CD4-positive, alpha-beta memory T cell (primary cell): ENCODE measurements at regions of chr6 and their contacts with region 1.

Region 1: DNA sequence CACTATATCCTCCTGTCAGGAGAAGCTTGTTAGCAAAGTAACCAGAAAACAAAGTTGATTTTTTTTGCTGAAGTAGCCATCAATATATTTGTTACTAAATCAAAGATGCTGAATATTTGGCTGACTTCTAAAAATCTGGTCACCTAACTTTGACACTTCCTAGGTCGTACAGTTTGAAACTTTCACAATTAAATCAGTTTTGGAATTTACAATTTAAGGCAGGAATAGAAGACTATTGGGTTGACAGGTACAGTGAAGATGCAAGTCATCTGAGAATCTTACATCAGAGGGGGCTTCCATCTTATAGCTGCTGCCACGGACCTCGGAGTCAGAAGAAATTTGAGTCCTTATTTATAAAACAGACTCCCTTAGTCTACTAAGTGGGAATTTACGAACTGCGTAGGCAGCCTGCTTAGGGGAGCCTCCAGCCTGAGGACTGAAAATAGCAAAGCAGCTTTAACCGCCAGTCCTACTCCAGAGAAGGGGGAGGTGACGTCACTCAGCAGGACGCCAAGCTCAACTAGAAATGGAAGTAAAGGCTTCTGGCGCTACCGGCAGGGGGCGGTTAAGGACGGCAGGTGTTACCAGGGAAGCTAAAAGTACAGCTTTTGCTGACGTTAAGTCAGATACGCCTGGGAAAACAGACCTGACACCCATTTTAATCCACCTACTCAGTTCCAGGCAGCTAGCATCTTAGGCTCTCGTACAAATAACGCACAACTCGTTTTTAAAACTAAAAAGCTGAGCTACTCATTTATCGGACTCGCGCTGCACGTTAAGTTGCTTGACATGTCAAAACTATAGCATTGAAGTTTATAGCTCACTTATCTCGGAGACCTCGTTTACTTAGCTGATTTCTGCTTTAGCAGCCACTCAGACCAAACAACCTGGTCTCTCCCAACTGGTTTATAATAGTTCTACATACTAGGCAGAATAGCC is 61.1 kb upstream of the HFE start:
- DNase-seq: peak; percentile 90 to 98 (median 94)
- H3K4me3 ChIP-seq: peak overlapping the region; percentile 67 to 74
- H3K4me3 Mint-ChIP-seq: peak overlapping the region; percentile 85 to 98 (median 92)
- H3K27ac ChIP-seq: peak overlapping the region; percentile 89
- H3K27ac Mint-ChIP-seq: peak overlapping the region; percentile 96 to 100 (median 99)
- H3K4me1 ChIP-seq: peaks cover 29% of the 10 kb centered on the region
- H3K4me1 Mint-ChIP-seq: peaks cover 22 to 60% (median 39%) of the 10 kb centered on the region in 4 donors
- H3K27me3 ChIP-seq: no peaks in the 10 kb centered on the region
- H3K27me3 Mint-ChIP-seq: peaks cover 0 to 4% of the 10 kb centered on the region in 2 donors

Region 2: DNA sequence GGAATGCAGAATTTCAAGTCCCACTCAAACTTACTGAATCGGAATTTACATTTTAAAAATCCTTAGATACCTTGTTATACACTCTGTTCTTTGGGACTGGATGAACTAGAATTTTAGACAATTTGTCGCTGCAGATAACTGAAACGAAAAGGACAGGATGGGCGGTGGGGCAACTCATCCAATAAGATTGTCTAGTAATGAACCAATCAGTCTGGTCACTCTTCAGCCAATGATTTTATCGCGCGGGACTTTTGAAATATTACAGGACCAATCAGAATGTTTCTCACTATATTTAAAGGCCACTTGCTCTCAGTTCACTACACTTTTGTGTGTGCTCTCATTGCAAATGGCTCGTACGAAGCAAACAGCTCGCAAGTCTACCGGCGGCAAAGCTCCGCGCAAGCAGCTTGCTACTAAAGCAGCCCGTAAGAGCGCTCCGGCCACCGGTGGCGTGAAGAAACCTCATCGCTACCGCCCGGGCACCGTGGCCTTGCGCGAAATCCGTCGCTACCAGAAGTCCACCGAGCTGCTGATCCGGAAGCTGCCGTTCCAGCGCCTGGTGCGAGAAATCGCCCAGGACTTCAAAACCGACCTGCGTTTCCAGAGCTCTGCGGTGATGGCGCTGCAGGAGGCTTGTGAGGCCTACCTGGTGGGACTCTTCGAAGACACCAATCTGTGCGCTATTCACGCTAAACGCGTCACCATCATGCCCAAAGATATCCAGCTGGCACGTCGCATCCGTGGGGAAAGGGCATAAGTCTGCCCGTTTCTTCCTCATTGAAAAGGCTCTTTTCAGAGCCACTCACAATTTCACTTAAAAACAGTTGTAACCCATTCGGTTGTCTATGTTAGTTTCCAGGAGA is 19.1 kb after region 1 on chr6:
- CTCF ChIA-PET with region 1: interaction called, 144 read pairs
- POLR2A ChIA-PET with region 1: interaction called, 1,198 read pairs
- intact Hi-C with region 1: loop called (anchors 1 kb)
- DNase-seq: peak; percentile 88 to 91 (median 90)
- H3K4me3 ChIP-seq: peak overlapping the region; percentile 72 to 74
- H3K4me3 Mint-ChIP-seq: peak overlapping the region; percentile 88 to 98 (median 94)
- H3K27ac ChIP-seq: peak overlapping the region; percentile 76
- H3K27ac Mint-ChIP-seq: peak overlapping the region; percentile 93 to 99 (median 98)
- H3K4me1 ChIP-seq: peaks cover 14% of the 10 kb centered on the region
- H3K4me1 Mint-ChIP-seq: peaks cover 12 to 28% (median 20%) of the 10 kb centered on the region in 4 donors
- H3K27me3 ChIP-seq: no peaks in the 10 kb centered on the region
- H3K27me3 Mint-ChIP-seq: no peaks in the 10 kb centered on the region

Region 3: GRCh38 chr6:26103770-26104456 is 77.8 kb after region 1 on chr6:
- CTCF ChIA-PET with region 1: interaction called, 7 read pairs
- POLR2A ChIA-PET with region 1: interaction called, 29 read pairs
- intact Hi-C with region 1: loop called (anchors 2 kb)
- DNase-seq: peak; percentile 93 to 96 (median 94)
- H3K4me3 ChIP-seq: peak overlapping the region; percentile 36 to 39
- H3K4me3 Mint-ChIP-seq: peak overlapping the region; percentile 84 to 96 (median 92)
- H3K27ac ChIP-seq: peak overlapping the region; percentile 66
- H3K27ac Mint-ChIP-seq: peak overlapping the region; percentile 96 to 100 (median 99)
- H3K4me1 ChIP-seq: peaks cover 17% of the 10 kb centered on the region
- H3K4me1 Mint-ChIP-seq: peaks cover 11 to 19% (median 15%) of the 10 kb centered on the region in 4 donors
- H3K27me3 ChIP-seq: no peaks in the 10 kb centered on the region
- H3K27me3 Mint-ChIP-seq: peaks cover 2 to 6% of the 10 kb centered on the region in 2 donors

Region 4: DNA sequence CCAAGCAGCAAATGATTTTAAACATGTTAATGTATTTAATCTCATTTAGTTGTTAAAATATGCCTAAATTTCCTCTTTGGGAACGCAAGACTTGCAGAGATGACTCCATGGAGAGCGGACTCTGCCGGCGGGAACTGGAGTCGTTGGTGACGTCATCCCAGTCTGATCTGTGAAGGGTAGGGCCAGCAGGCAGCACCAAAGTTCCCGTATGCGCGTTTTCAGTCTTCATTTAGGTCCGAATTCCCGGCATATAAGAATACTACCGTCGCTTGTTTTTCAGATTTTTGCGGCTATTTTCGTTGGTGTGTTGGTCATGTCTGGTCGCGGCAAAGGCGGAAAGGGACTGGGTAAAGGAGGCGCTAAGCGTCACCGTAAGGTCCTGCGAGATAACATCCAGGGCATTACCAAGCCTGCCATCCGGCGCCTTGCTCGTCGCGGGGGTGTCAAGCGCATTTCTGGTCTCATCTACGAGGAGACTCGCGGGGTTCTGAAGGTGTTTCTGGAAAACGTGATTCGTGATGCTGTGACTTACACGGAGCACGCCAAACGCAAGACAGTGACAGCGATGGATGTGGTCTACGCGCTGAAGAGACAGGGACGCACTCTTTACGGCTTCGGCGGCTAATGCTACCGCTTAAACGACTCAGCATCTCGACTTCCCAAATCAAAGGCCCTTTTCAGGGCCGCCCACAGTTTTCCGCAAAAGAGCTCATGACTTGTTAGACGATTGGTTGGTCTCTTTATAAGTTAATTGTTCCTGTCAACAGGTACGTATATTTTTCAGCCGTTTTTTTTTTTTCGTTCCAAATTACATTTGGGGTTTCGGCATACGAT is 178.4 kb after region 1 on chr6:
- CTCF ChIA-PET with region 1: interaction called, 4 read pairs
- POLR2A ChIA-PET with region 1: interaction called, 100 read pairs
- intact Hi-C with region 1: loop called (anchors 2 kb)
- DNase-seq: peak; percentile 85 to 95 (median 89)
- H3K4me3 ChIP-seq: peak overlapping the region; percentile 48 to 87
- H3K4me3 Mint-ChIP-seq: no peak overlapping the region
- H3K27ac ChIP-seq: peak overlapping the region; percentile 82
- H3K27ac Mint-ChIP-seq: no peak overlapping the region
- H3K4me1 ChIP-seq: peaks cover 39% of the 10 kb centered on the region
- H3K4me1 Mint-ChIP-seq: peaks cover 8 to 26% (median 13%) of the 10 kb centered on the region in 4 donors
- H3K27me3 ChIP-seq: no peaks in the 10 kb centered on the region
- H3K27me3 Mint-ChIP-seq: peaks cover 0 to 3% of the 10 kb centered on the region in 2 donors

Region 5: DNA sequence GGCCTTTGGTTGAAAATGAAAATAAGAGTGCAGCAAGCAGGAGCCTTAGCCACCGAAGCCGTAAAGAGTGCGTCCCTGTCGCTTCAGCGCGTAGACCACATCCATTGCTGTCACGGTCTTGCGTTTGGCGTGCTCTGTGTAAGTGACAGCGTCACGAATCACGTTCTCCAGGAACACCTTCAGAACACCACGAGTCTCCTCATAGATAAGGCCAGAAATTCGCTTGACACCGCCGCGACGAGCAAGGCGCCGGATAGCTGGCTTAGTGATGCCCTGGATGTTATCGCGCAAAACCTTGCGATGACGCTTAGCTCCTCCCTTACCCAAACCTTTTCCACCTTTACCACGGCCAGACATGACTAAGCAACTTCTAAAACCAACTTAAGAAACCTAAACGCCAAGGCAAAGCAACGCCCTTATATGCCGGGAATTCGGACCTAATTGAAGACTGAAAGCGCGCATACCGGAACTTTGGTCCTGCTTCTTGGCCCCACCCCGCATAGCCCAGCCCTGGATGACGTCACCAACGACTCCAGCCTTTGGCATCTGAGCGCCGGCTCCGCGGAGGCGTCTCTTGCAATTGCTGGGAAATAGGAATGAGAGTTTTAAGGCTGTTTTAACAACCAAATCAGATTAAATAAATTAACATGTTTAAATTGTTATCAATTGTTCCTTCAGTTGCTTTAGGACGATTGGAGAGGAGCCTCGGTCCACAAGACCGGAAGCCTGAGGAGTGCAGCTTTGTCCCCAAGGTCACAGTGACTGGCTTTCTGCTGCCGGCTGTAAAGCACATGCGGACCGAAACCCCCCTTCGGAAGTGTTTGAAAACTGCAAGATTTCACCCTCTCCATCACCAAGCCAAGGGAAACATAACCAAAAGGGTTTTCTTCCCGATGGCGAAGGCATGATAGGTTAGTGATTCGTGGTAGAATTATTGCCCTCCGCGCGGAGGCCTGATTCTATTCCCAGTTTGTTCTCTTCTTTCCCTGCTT is 259.3 kb after region 1 on chr6:
- CTCF ChIA-PET with region 1: no interaction called
- POLR2A ChIA-PET with region 1: interaction called, 15 read pairs
- intact Hi-C with region 1: no loop called
- DNase-seq: peak; percentile 91 to 98 (median 95)
- H3K4me3 ChIP-seq: peak overlapping the region; percentile 51 to 75
- H3K4me3 Mint-ChIP-seq: peak overlapping the region; percentile 83 to 95 (median 91)
- H3K27ac ChIP-seq: peak overlapping the region; percentile 81
- H3K27ac Mint-ChIP-seq: peak overlapping the region; percentile 95 to 99 (median 99)
- H3K4me1 ChIP-seq: peaks cover 13% of the 10 kb centered on the region
- H3K4me1 Mint-ChIP-seq: peaks cover 8 to 34% (median 19%) of the 10 kb centered on the region in 4 donors
- H3K27me3 ChIP-seq: no peaks in the 10 kb centered on the region
- H3K27me3 Mint-ChIP-seq: peaks cover 2 to 9% of the 10 kb centered on the region in 2 donors

Region 6: DNA sequence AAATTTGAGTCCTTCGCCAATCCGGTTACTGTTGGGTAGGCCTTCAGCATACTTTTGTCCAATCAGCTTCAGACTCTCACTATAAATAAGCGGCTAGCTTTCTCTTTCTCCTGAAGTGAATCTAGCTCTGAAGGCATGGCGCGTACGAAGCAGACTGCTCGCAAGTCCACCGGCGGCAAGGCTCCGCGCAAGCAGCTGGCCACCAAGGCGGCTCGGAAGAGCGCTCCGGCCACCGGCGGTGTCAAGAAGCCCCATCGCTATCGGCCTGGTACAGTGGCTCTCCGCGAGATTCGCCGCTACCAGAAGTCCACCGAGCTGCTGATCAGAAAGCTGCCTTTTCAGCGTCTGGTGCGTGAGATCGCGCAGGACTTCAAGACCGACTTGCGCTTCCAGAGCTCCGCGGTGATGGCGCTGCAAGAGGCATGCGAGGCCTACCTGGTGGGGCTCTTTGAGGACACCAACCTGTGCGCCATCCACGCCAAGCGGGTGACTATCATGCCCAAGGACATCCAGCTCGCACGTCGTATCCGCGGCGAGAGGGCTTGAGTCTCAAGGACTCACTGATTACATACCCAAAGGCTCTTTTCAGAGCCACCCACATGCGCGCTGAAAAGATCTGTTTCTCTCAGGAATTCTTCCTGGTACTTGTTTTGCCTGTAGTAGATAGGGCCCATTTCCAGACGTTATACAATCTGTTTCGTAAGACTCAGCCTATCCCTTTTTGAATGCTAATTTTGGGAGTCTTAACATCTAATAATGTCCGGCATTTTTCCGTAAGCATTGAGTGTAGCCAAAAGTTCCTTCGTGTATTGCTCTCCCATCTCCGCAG is 1784.0 kb after region 1 on chr6:
- CTCF ChIA-PET with region 1: interaction called, 5 read pairs
- POLR2A ChIA-PET with region 1: interaction called, 49 read pairs
- intact Hi-C with region 1: loop called (anchors 2 kb)
- DNase-seq: peak; percentile 85 to 94 (median 92)
- H3K4me3 ChIP-seq: peak overlapping the region; percentile 31 to 67
- H3K4me3 Mint-ChIP-seq: peak overlapping the region; percentile 92 to 99 (median 96)
- H3K27ac ChIP-seq: peak overlapping the region; percentile 79
- H3K27ac Mint-ChIP-seq: peak overlapping the region; percentile 94 to 98 (median 97)
- H3K4me1 ChIP-seq: peaks cover 49% of the 10 kb centered on the region
- H3K4me1 Mint-ChIP-seq: peaks cover 39 to 74% (median 50%) of the 10 kb centered on the region in 4 donors
- H3K27me3 ChIP-seq: no peaks in the 10 kb centered on the region
- H3K27me3 Mint-ChIP-seq: no peaks in the 10 kb centered on the region